CD4-positive, alpha-beta memory T cell (primary cell): ENCODE measurements at regions of chr19 and their contacts with region 1.

Region 1: GRCh38 chr19:48203732-48204628 is 33.5 kb downstream of the ZSWIM9 start:
- DNase-seq: peak; percentile 87 to 93 (median 87)
- H3K4me3 ChIP-seq: peak overlapping the region; percentile 70 to 91
- H3K4me3 Mint-ChIP-seq: no peak overlapping the region
- H3K27ac ChIP-seq: peak overlapping the region; percentile 70
- H3K27ac Mint-ChIP-seq: no peak overlapping the region
- H3K4me1 ChIP-seq: peaks cover 14% of the 10 kb centered on the region
- H3K4me1 Mint-ChIP-seq: peaks cover 9 to 19% (median 12%) of the 10 kb centered on the region in 4 donors
- H3K27me3 ChIP-seq: no peaks in the 10 kb centered on the region
- H3K27me3 Mint-ChIP-seq: no peaks in the 10 kb centered on the region

Region 2: DNA sequence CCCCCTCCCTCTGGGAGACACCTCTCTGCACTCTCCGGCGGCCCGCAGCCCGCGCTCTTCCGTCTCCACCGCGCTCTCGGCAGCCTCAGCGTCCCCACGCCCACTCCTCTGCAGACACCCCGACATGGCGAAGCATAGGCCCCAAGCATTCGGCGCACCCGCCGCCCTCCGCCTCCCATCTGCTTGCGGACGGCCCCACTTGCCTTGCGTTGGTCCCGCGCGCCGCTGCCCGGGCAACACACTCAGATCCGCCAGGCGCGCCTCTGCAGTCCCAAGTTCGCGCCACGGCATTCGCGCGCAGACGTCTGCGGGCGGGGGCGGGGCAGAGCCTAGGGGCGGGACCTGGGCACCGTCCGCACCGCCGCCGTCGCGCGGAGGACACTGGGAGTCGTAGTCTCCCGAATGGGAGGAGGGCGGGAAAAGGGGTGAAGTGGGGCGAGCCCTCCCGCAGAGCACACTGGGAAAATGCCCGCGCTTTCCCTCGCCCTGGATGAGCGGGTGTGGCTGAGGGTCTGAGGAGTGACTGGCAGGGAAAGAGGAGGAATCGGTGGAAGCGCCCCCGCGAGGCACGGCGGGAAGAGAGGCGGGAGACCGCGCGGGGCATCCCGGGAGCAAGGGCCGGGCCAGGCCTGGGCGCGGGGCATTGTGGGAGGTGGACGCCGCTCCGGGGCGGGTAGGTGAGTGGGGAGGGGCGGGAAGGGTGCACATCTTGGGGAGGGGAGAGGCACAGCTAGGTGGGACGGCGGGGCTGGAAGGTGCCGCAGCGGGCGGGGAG is 33.8 kb before region 1 on chr19 and contains the starts of genes LIG1 and ZSWIM9:
- CTCF ChIA-PET with region 1: interaction called, 4 read pairs
- POLR2A ChIA-PET with region 1: interaction called, 27 read pairs
- intact Hi-C with region 1: loop called (anchors 1 kb)
- DNase-seq: peak; percentile 90 to 97 (median 93)
- H3K4me3 ChIP-seq: peak within 1 kb of the TSS; percentile 65 to 97
- H3K4me3 Mint-ChIP-seq: peak within 1 kb of the TSS; percentile 96 to 99 (median 97)
- H3K27ac ChIP-seq: peak within 1 kb of the TSS; percentile 86
- H3K27ac Mint-ChIP-seq: peak within 1 kb of the TSS; percentile 93 to 99 (median 98)
- H3K4me1 ChIP-seq: peaks cover 24% of the 10 kb centered on the region
- H3K4me1 Mint-ChIP-seq: peaks cover 18 to 32% (median 23%) of the 10 kb centered on the region in 4 donors
- H3K27me3 ChIP-seq: no peaks in the 10 kb centered on the region
- H3K27me3 Mint-ChIP-seq: no peaks in the 10 kb centered on the region
- total RNA-seq, gene LIG1: 118 to 124 TPM
- total RNA-seq, gene ZSWIM9: 10.5 to 11.8 TPM

Region 3: DNA sequence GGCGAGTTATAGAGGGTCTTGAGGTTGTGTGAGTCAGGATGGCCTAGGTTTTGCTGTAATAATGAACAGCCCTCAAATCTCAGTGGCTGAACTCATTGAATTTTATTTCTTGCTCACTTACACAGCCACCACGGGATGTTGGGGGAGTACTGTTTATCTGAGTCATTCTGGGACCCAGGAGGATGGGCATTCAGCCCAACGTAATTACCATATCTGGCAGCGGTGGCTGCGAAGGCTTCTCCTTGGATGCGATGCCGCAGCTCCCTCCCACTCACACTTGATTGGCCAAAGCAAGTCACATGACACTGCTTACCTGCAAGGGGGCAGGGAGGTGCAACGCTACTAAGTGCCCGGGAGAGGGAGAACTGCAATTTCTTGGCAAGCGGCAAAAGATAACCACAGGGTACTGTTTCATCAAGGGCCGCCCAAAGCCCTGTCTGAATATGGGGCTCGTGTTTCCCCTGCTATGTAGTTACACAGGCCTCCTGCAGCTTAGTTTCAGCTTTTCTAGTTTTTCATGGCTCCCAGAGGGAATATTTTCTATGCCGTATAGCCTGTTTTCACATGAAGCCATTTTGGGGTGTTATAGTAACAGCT is 13.6 kb before region 1 on chr19:
- CTCF ChIA-PET with region 1: interaction called, 12 read pairs
- POLR2A ChIA-PET with region 1: interaction called, 7 read pairs
- intact Hi-C with region 1: no loop called
- DNase-seq: peak; percentile 36 to 77 (median 54)
- H3K4me3 ChIP-seq: no peak overlapping the region
- H3K4me3 Mint-ChIP-seq: no peak overlapping the region
- H3K27ac ChIP-seq: no peak overlapping the region
- H3K27ac Mint-ChIP-seq: peak overlapping the region in 3 of 7 donors; percentile 3 to 63 (median 29)
- H3K4me1 ChIP-seq: no peaks in the 10 kb centered on the region
- H3K4me1 Mint-ChIP-seq: peaks cover 2 to 21% (median 4%) of the 10 kb centered on the region in 4 donors
- H3K27me3 ChIP-seq: no peaks in the 10 kb centered on the region
- H3K27me3 Mint-ChIP-seq: no peaks in the 10 kb centered on the region

Region 4: GRCh38 chr19:48218997-48219396 is 15.0 kb after region 1 on chr19:
- CTCF ChIA-PET with region 1: interaction called, 5 read pairs
- POLR2A ChIA-PET with region 1: interaction called, 18 read pairs
- intact Hi-C with region 1: no loop called
- DNase-seq: no peak
- H3K4me3 ChIP-seq: no peak overlapping the region
- H3K4me3 Mint-ChIP-seq: no peak overlapping the region
- H3K27ac ChIP-seq: no peak overlapping the region
- H3K27ac Mint-ChIP-seq: peak overlapping the region in 4 of 7 donors; percentile 6 to 69 (median 28)
- H3K4me1 ChIP-seq: no peaks in the 10 kb centered on the region
- H3K4me1 Mint-ChIP-seq: peaks cover 4 to 10% (median 9%) of the 10 kb centered on the region in 4 donors
- H3K27me3 ChIP-seq: no peaks in the 10 kb centered on the region
- H3K27me3 Mint-ChIP-seq: no peaks in the 10 kb centered on the region

Region 5: DNA sequence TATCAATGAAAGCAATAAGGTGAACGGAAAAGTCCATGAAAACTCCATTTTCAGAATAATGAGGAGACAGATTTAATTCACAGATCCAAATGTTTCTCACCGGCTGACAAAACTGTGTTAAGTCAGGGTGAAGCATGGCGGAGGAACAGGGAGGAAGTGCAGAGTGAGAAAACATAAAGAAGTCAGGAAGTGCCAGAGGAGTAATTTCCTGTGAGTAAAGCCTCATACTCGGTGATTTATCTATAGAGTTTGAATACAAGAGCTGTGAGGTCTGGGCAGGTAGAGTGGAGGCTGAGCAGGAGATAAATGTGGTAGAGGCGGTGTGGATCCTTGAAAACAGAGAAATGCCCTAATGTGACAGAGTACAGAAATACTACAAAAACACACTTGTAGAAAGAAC is 40.3 kb after region 1 on chr19:
- CTCF ChIA-PET with region 1: interaction called, 5 read pairs
- POLR2A ChIA-PET with region 1: interaction called, 28 read pairs
- intact Hi-C with region 1: no loop called
- DNase-seq: peak; percentile 45 to 62 (median 47)
- H3K4me3 ChIP-seq: peak overlapping the region in 1 of 2 donors; percentile 38
- H3K4me3 Mint-ChIP-seq: peak overlapping the region; percentile 63 to 82 (median 78)
- H3K27ac ChIP-seq: peak overlapping the region; percentile 62
- H3K27ac Mint-ChIP-seq: peak overlapping the region; percentile 83 to 92 (median 89)
- H3K4me1 ChIP-seq: peaks cover 52% of the 10 kb centered on the region
- H3K4me1 Mint-ChIP-seq: peaks cover 32 to 64% (median 49%) of the 10 kb centered on the region in 4 donors
- H3K27me3 ChIP-seq: no peaks in the 10 kb centered on the region
- H3K27me3 Mint-ChIP-seq: no peaks in the 10 kb centered on the region

Region 6: DNA sequence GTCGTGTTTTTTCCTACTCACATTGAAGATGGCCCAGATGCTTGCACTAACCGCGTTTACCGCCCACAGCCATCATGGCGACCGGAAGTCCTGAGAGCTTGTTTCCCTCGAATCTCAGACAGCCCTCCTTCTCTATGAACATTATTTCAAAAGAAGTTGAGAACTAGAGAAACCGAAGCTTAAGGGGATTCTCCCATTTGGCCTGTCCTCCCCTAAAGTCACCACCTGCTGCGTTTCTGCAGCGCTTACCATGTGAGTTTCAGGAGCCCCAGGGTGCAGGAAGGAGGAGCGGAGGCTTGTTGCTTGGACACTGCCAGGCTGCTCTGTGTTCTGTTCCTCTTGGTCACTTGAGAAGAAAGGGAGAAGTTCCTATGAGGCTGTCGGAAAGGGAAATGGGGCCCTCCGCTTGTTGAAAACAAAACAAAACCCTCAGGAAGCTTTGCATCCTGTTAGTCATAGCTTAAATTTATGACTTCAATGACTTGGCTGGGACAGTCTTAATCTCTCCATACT is 45.6 kb after region 1 on chr19:
- CTCF ChIA-PET with region 1: interaction called, 4 read pairs
- POLR2A ChIA-PET with region 1: interaction called, 30 read pairs
- intact Hi-C with region 1: no loop called
- DNase-seq: peak; percentile 74 to 88 (median 76)
- H3K4me3 ChIP-seq: peak overlapping the region; percentile 48 to 87
- H3K4me3 Mint-ChIP-seq: peak overlapping the region; percentile 91 to 97 (median 94)
- H3K27ac ChIP-seq: peak overlapping the region; percentile 93
- H3K27ac Mint-ChIP-seq: peak overlapping the region; percentile 98 to 99 (median 98)
- H3K4me1 ChIP-seq: peaks cover 89% of the 10 kb centered on the region
- H3K4me1 Mint-ChIP-seq: peaks cover 56 to 87% (median 69%) of the 10 kb centered on the region in 4 donors
- H3K27me3 ChIP-seq: no peaks in the 10 kb centered on the region
- H3K27me3 Mint-ChIP-seq: no peaks in the 10 kb centered on the region

Region 7: GRCh38 chr19:48255376-48256303 is 51.7 kb after region 1 on chr19 and contains the start of gene CARD8:
- CTCF ChIA-PET with region 1: interaction called, 28 read pairs
- POLR2A ChIA-PET with region 1: interaction called, 39 read pairs
- intact Hi-C with region 1: loop called (anchors 1 kb)
- DNase-seq: peak; percentile 83 to 92 (median 87)
- H3K4me3 ChIP-seq: peak within 1 kb of the TSS; percentile 77 to 86
- H3K4me3 Mint-ChIP-seq: peak within 1 kb of the TSS; percentile 92 to 99 (median 99)
- H3K27ac ChIP-seq: peak within 1 kb of the TSS; percentile 90
- H3K27ac Mint-ChIP-seq: peak within 1 kb of the TSS; percentile 93 to 100 (median 98)
- H3K4me1 ChIP-seq: peaks cover 75% of the 10 kb centered on the region
- H3K4me1 Mint-ChIP-seq: peaks cover 47 to 83% (median 61%) of the 10 kb centered on the region in 4 donors
- H3K27me3 ChIP-seq: no peaks in the 10 kb centered on the region
- H3K27me3 Mint-ChIP-seq: no peaks in the 10 kb centered on the region
- total RNA-seq, gene CARD8: 310 to 316 TPM